Activated B cell treated with CpG ODN at 0.5 μM for 24 hours (primary cell): ENCODE measurements at regions of chr7 and their contacts with region 1.

Region 1: DNA sequence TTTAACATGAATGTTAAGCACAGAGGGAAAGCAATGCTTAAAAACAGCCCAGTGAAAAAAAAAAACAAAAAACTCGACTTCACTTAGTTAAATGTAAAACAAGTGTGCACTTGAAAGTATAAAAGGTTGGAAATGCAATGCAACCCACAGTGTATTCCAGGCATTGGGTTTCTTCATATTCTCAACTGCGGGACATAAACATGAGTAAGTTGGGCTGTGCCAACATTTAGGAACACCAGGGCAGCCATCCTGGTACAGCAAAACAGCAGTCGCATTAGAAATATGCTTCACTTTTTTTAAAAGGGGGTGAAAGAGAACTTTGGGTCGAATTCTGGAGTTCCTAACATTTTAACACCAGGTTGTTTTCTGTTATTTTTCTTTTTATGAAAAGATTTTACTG is 937 bp downstream of the STEAP1 start:
- DNase-seq: no peak
- ATAC-seq: no peak
- H3K4me3 Mint-ChIP-seq: no peak overlapping the region
- H3K27ac Mint-ChIP-seq: no peak overlapping the region
- H3K4me1 Mint-ChIP-seq: peaks cover 3% of the 10 kb centered on the region
- H3K27me3 Mint-ChIP-seq: peaks cover 20% of the 10 kb centered on the region
- CTCF ChIP-seq: no peak

Region 2: GRCh38 chr7:90244909-90245851 is 90.0 kb after region 1 on chr7 and contains the start of gene CFAP69:
- CTCF ChIA-PET with region 1: no interaction called
- POLR2A ChIA-PET with region 1: no interaction called
- intact Hi-C with region 1: loop called (anchors 5 kb)
- DNase-seq: peak; percentile 82
- ATAC-seq: peak; percentile 89
- H3K4me3 Mint-ChIP-seq: peak within 1 kb of the TSS; percentile 87
- H3K27ac Mint-ChIP-seq: peak within 1 kb of the TSS; percentile 3
- H3K4me1 Mint-ChIP-seq: peaks cover 29% of the 10 kb centered on the region
- H3K27me3 Mint-ChIP-seq: peaks cover 37% of the 10 kb centered on the region
- CTCF ChIP-seq: no peak
- total RNA-seq, gene CFAP69: 0.62 TPM in 1 of 2 replicates, not detected in the other

Region 3: DNA sequence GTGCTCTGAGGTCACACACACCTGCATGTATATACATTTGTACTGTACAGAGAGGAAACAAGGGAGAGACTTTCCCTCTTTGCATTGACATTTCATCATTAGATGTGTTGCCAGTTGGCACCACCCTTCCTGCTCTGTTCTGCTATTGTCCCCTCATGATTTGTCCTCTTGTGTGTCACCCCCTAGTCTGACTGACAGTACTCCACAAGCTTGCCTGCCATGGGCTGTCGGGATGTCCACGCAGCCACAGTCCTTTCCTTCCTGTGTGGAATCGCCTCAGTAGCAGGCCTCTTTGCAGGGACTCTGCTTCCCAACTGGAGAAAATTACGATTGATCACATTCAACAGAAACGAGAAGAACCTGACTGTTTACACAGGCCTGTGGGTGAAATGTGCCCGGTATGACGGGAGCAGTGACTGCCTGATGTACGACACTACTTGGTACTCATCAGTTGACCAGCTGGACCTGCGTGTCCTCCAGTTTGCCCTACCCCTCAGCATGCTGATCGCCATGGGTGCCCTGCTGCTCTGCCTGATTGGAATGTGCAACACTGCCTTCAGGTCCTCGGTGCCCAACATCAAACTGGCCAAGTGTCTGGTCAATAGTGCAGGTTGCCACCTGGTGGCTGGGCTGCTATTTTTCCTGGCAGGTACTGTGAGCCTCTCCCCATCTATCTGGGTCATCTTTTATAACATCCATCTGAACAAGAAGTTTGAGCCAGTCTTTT is 257.4 kb after region 1 on chr7:
- CTCF ChIA-PET with region 1: interaction called, 3 read pairs
- POLR2A ChIA-PET with region 1: no interaction called
- intact Hi-C with region 1: loop called (anchors 5 kb)
- DNase-seq: no peak
- ATAC-seq: no peak
- H3K4me3 Mint-ChIP-seq: no peak overlapping the region
- H3K27ac Mint-ChIP-seq: no peak overlapping the region
- H3K4me1 Mint-ChIP-seq: no peaks in the 10 kb centered on the region
- H3K27me3 Mint-ChIP-seq: no peaks in the 10 kb centered on the region
- CTCF ChIP-seq: no peak

Region 4: GRCh38 chr7:90552521-90552920 is 397.3 kb after region 1 on chr7:
- CTCF ChIA-PET with region 1: no interaction called
- POLR2A ChIA-PET with region 1: no interaction called
- intact Hi-C with region 1: no loop called
- DNase-seq: no peak
- ATAC-seq: peak; percentile 34
- H3K4me3 Mint-ChIP-seq: no peak overlapping the region
- H3K27ac Mint-ChIP-seq: no peak overlapping the region
- H3K4me1 Mint-ChIP-seq: peaks cover 3% of the 10 kb centered on the region
- H3K27me3 Mint-ChIP-seq: peaks cover 3% of the 10 kb centered on the region
- CTCF ChIP-seq: no peak

Region 5: DNA sequence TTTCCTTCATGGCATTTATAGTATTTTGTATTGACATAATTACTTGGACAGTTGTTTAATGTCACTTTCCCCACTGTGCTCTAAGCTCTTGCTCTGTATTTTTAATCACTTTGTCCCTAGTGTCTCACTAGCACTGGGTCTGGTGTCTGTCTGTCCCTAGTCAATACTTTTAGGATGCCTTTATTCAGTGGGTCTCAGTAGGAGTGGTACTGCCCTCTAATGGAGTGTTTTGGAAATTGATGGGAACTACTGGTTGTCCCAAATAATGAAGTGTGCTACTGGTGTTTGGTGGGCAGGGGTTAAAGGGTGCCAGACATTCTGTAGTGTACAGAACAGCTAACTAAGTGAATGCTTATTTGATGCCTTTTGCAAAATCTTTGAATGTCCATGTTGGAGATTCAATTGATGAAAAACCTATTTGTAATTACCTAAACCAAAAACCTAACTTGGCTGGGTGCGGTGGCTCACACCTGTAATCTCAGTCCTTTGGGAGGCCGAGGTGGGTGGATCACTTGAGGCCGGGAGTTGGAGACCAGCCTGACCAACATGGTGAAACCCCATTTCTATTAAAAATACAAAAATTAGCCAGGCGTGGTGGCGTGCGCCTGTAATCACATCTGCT is 474.2 kb after region 1 on chr7:
- CTCF ChIA-PET with region 1: no interaction called
- POLR2A ChIA-PET with region 1: no interaction called
- intact Hi-C with region 1: loop called (anchors 1 kb)
- DNase-seq: no peak
- ATAC-seq: peak; percentile 86
- H3K4me3 Mint-ChIP-seq: no peak overlapping the region
- H3K27ac Mint-ChIP-seq: peak overlapping the region; percentile 19
- H3K4me1 Mint-ChIP-seq: peaks cover 16% of the 10 kb centered on the region
- H3K27me3 Mint-ChIP-seq: no peaks in the 10 kb centered on the region
- CTCF ChIP-seq: peak; percentile 68